ENCODE measurements at regions of chr19 and their contacts with region 1.

Region 1: GRCh38 chr19:41310033-41310758 is at the start of gene CCDC97:
- DNase-seq: peak; percentile 90
- H3K4me3 Mint-ChIP-seq: peak within 1 kb of the TSS; percentile 98
- H3K27ac Mint-ChIP-seq: peak within 1 kb of the TSS; percentile 98
- H3K4me1 Mint-ChIP-seq: peaks cover 79% of the 10 kb centered on the region
- H3K27me3 Mint-ChIP-seq: no peaks in the 10 kb centered on the region
- total RNA-seq, gene CCDC97: 43.0 to 43.4 TPM

Region 2: DNA sequence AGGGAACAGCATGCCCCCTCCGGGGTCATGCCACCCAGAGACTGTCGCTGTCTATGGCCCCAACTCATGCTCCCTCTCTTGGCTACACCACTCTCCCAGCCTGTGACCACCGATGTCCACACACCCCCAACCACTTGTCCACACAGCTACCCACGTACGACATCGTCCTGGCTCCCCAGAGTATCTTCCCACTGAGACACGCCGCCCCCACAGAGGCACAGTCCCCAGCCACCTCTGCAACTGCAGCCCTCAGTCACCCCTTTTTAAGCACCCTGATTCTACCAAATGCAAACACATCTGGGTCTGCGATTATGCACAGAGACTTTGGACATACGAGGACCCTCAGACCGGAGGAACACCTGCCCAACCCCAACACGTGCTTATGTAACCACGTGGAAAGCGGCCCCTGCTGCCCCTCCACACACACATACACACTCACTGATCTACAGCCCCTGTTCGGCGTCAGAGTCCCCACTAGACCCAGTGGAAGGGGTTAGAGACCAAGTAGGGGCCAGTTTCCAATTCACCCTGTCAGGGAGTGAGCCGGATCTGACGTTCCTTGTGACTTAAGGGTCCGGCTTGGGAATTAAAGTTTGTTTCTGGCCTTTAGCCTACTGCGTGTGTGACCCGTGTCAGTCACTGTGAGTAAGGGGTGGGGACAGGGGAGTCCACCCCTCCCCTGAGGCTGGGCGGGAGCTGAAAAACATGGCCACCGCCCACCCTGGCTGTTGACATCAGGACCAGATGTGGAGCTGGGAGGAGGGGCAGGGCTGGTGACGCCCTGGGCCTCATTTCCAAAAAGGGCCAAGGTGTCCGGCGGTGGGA is 103.1 kb before region 1 on chr19:
- CTCF ChIA-PET with region 1: interaction called, 19 read pairs
- POLR2A ChIA-PET with region 1: interaction called, 8 read pairs
- DNase-seq: no peak
- H3K4me3 Mint-ChIP-seq: no peak overlapping the region
- H3K27ac Mint-ChIP-seq: no peak overlapping the region
- H3K4me1 Mint-ChIP-seq: peaks cover 10% of the 10 kb centered on the region
- H3K27me3 Mint-ChIP-seq: peaks cover 2% of the 10 kb centered on the region

Region 3: DNA sequence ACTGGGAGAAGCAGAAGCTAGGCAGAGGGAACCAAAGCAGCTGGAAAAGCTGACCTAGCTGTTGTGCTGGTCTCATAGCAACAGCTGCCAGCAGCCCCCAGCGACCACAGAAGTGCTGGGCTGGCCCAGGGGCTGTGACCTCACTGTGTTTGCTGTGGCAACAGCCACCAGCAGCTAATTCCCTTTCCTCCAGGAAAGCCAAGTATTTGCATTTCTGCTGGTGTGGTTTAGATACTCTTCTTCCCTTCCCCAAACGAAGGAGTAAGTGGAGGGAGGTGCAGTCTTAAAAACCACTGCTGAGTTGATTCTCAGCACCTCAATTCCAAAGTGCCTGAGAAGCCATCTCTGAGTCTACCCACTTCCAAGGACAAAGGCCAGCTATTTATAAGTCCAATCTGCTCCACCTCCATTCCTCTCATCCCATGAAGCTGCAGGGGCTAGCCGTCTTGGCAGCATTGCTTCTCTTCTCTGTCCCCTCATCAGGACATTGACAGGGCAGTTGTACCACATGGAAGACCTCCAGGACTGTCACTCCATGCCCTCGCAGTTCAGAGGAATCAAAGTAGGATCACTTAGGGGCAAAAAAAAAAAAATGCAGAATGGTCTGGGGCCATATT is 11.7 kb before region 1 on chr19:
- CTCF ChIA-PET with region 1: interaction called, 23 read pairs
- POLR2A ChIA-PET with region 1: interaction called, 62 read pairs
- DNase-seq: no peak
- H3K4me3 Mint-ChIP-seq: no peak overlapping the region
- H3K27ac Mint-ChIP-seq: peak overlapping the region; percentile 98
- H3K4me1 Mint-ChIP-seq: peaks cover 91% of the 10 kb centered on the region
- H3K27me3 Mint-ChIP-seq: no peaks in the 10 kb centered on the region

Region 4: DNA sequence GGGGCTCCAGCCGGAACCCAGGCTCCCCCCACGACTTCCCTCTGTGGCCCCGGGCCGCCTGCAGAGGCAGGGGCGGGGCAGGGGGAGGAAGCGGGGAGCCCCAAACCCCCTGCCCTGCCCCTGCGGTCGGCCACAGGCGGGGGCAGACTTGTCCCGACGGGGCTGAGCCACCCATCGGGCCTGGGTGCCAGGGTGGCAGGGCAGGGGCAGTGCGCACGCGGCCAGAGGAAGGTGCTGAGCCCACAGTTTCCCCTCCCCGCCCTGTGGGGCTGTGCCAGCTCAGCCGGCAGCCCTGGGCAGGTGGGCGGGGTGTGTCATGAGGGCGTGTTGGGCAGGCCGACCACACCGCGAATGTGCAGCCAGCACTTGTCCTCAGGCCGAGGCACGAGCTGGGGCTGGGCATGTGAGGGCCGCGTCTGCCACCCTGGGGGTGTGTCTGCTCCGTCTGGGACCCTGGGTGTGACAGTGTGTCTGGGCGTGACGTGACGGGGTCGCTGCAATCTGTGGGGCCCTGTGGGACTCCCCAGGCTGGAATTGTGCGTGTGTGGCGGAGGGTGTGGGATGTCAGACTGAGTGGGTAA is 17.5 kb after region 1 on chr19:
- CTCF ChIA-PET with region 1: interaction called, 11 read pairs
- POLR2A ChIA-PET with region 1: interaction called, 45 read pairs
- DNase-seq: peak; percentile 89
- H3K4me3 Mint-ChIP-seq: peak overlapping the region; percentile 68
- H3K27ac Mint-ChIP-seq: peak overlapping the region; percentile 95
- H3K4me1 Mint-ChIP-seq: peaks cover 73% of the 10 kb centered on the region
- H3K27me3 Mint-ChIP-seq: no peaks in the 10 kb centered on the region

Region 5: DNA sequence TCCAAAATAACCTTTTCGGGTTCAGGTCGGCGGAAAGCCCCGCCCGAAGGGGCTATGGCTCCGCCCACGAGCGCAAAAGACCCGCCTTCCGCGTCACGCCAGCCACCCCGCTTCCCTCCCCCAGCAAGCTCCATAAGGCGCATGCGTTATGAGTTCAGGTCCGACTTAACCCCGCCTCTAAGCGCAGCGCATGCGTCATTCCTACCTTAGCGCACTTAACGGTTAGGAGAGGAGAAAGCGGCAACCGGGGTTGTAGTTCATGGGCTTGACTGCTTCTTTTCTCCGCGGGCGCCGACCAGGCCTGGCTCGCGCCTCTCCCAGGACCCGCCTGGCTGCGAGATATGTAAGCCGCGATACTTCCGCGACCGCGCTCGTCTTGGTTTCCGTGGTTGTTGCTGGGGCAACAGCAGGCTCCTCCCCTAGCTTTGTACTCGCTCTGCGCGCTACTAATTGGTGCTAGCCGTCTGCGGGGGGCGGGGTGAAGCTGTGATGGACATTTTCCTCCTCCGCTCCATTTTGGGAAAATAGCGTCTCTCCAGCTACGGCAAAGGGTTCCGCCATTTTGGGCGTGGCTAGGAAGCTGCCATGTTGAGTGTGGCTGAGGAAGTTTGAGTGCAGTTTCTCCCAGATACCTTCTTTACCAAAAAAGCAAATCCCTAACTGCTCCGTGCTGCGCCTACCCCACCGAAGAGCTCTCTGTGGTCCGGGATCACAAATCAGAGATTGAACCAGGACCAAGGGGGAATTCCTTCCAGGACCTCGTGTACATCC is 53.7 kb after region 1 on chr19 and contains the start of gene B9D2:
- CTCF ChIA-PET with region 1: interaction called, 9 read pairs
- POLR2A ChIA-PET with region 1: interaction called, 12 read pairs
- DNase-seq: peak; percentile 98
- H3K4me3 Mint-ChIP-seq: peak within 1 kb of the TSS; percentile 87
- H3K27ac Mint-ChIP-seq: peak within 1 kb of the TSS; percentile 93
- H3K4me1 Mint-ChIP-seq: peaks cover 40% of the 10 kb centered on the region
- H3K27me3 Mint-ChIP-seq: no peaks in the 10 kb centered on the region
- total RNA-seq, gene B9D2: 10.8 to 11.2 TPM

Measured in activated CD4-positive, alpha-beta memory T cell treated with anti-CD3 and anti-CD28 coated beads, Interleukin-2, amount 10 ng/mL, durations not matched to agents 7 days and 5 days (primary cell).